ENCODE measurements at regions of chr6 and their contacts with region 1.

Region 1: DNA sequence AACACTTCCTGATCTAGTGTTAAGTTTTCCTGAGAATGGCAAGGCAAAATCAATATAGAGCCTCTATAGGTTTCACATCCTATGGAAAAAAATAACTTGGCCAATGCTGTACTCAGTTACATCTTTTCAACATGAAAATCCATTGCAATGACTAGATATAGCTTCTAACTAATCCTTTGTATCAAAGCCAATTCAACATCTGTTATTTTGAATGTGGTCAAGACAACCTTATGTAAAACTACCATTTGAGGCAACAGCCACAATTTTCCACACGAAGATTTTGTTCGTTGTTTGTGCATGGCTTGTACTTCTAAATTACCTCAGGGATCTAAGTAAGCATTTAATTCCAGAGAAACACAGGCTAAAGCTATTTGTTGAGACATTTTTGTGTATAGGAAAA is 637.8 kb upstream of the EYS start:
- DNase-seq: no peak
- ATAC-seq: no peak
- H3K4me3 ChIP-seq: no peak overlapping the region
- H3K27ac ChIP-seq: no peak overlapping the region
- H3K4me1 ChIP-seq: no peaks in the 10 kb centered on the region
- H3K27me3 ChIP-seq: no peaks in the 10 kb centered on the region
- CTCF ChIP-seq: no peak

Region 2: DNA sequence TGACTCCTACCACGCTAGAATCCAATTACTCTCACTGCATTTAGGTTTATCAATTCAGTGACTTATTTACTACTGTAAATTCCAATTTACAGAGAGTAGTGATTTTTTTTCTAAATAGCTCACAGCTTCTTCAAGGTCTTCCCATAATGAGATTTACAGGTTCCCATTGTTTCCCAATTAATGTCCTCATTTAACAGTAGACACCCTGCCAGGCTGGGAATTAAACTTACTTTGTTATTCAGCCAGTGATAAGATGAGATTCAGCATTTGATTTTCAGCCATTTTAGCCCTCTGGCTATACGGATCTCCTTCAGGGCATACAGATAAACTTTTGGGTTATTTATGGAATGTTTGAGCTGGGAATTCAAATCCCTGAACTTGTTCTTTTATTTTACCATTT is 54.9 kb before region 1 on chr6:
- intact Hi-C with region 1: loop called in 1 of 10 experiments (anchors 5 kb)
- DNase-seq: no peak
- ATAC-seq: no peak
- H3K4me3 ChIP-seq: no peak overlapping the region
- H3K27ac ChIP-seq: no peak overlapping the region
- H3K4me1 ChIP-seq: no peaks in the 10 kb centered on the region
- H3K27me3 ChIP-seq: no peaks in the 10 kb centered on the region
- CTCF ChIP-seq: no peak

Region 3: DNA sequence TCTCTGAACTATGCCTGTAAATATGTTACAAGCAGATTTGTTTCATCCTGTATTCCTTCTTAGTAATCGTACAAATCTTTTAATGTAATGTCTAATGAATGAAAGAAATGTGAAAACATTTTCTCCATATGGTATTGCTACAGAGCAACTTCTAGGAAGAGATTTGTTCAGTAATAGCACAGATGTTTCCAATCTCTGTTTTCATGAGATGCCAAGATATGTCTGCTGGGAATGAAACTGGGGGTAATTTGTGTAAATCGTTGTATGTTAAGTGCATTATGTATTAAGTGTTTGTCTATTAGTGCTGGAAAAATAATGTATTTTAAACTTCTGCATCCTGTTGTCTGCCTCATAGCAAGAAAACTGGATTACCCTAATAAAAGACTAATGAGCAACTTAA is 84.4 kb after region 1 on chr6:
- intact Hi-C with region 1: no loop called
- DNase-seq: no peak
- ATAC-seq: no peak
- H3K4me3 ChIP-seq: no peak overlapping the region
- H3K27ac ChIP-seq: no peak overlapping the region
- H3K4me1 ChIP-seq: no peaks in the 10 kb centered on the region
- H3K27me3 ChIP-seq: no peaks in the 10 kb centered on the region
- CTCF ChIP-seq: no peak